CD4-positive, alpha-beta T cell (primary cell): ENCODE measurements at regions of chr1 and their contacts with region 1.

Region 1: DNA sequence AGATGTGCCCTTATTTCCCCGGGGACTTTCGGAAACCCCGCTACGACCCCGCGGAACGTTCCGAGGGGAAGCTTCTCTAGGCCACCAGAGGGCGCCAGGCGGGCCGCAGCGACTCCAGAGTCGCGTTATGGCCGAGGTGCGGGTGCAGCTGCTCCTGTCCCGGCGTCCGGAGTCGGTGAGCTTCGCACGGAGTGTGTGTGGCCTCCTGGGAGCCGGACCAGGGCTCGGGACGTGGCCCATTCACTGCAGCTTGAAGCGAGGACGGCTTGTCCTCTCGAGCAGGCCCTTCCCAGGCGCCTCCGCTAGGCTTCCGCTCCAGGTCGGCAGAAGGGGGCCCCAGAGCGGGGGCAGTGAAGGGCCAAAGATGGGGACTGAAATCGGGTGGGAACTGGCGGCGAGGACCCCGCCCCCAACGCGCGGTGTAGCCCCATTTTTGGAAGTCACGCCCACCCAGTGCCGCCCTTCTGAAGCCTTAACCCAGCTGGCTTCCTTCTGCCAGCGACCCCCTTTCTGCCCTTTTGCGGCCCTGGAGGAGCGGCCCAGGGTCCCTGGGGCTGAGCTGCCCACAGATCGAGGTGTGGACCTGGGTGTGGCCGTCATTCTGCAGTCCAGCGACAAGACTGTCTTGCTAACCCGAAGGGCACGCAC is at the start of gene NUDT17:
- DNase-seq: peak; percentile 63 to 88 (median 74)
- ATAC-seq: peak; percentile 80
- H3K4me3 ChIP-seq: peak within 1 kb of the TSS; percentile 77
- H3K4me3 Mint-ChIP-seq: no peak within 1 kb of the TSS
- H3K27ac ChIP-seq: no peak within 1 kb of the TSS
- H3K27ac Mint-ChIP-seq: peak within 1 kb of the TSS; percentile 40
- H3K4me1 ChIP-seq: peaks cover 20% of the 10 kb centered on the region
- H3K4me1 Mint-ChIP-seq: peaks cover 11% of the 10 kb centered on the region
- H3K27me3 ChIP-seq: no peaks in the 10 kb centered on the region
- H3K27me3 Mint-ChIP-seq: no peaks in the 10 kb centered on the region
- CTCF ChIP-seq: peak; percentile 96
- total RNA-seq, gene NUDT17: 1.6 to 2.8 TPM

Region 2: GRCh38 chr1:145804235-145805045 is 41.2 kb before region 1 on chr1:
- CTCF ChIA-PET with region 1: no interaction called
- POLR2A ChIA-PET with region 1: no interaction called
- intact Hi-C with region 1: no loop called
- DNase-seq: no peak
- ATAC-seq: no peak
- H3K4me3 ChIP-seq: no peak overlapping the region
- H3K4me3 Mint-ChIP-seq: no peak overlapping the region
- H3K27ac ChIP-seq: no peak overlapping the region
- H3K27ac Mint-ChIP-seq: no peak overlapping the region
- H3K4me1 ChIP-seq: no peaks in the 10 kb centered on the region
- H3K4me1 Mint-ChIP-seq: peaks cover 64% of the 10 kb centered on the region
- H3K27me3 ChIP-seq: no peaks in the 10 kb centered on the region
- H3K27me3 Mint-ChIP-seq: no peaks in the 10 kb centered on the region
- CTCF ChIP-seq: no peak

Region 3: GRCh38 chr1:145823565-145824498 is 21.8 kb before region 1 on chr1 and contains the starts of genes POLR3C and RNF115:
- CTCF ChIA-PET with region 1: interaction called, 27 read pairs
- POLR2A ChIA-PET with region 1: interaction called, 12 read pairs
- intact Hi-C with region 1: no loop called
- DNase-seq: peak; percentile 75 to 95 (median 86)
- ATAC-seq: peak; percentile 96
- H3K4me3 ChIP-seq: peak within 1 kb of the TSS; percentile 74
- H3K4me3 Mint-ChIP-seq: peak within 1 kb of the TSS; percentile 96
- H3K27ac ChIP-seq: peak within 1 kb of the TSS; percentile 78 to 81
- H3K27ac Mint-ChIP-seq: peak within 1 kb of the TSS; percentile 91
- H3K4me1 ChIP-seq: peaks cover 12% of the 10 kb centered on the region
- H3K4me1 Mint-ChIP-seq: peaks cover 29% of the 10 kb centered on the region
- H3K27me3 ChIP-seq: no peaks in the 10 kb centered on the region
- H3K27me3 Mint-ChIP-seq: no peaks in the 10 kb centered on the region
- CTCF ChIP-seq: no peak
- total RNA-seq, gene POLR3C: 18.6 to 19.9 TPM
- total RNA-seq, gene RNF115: 11.4 to 11.9 TPM

Region 4: GRCh38 chr1:145879775-145880174 is 34.1 kb after region 1 on chr1:
- CTCF ChIA-PET with region 1: interaction called, 17 read pairs
- POLR2A ChIA-PET with region 1: no interaction called
- intact Hi-C with region 1: no loop called
- DNase-seq: no peak
- ATAC-seq: no peak
- H3K4me3 ChIP-seq: no peak overlapping the region
- H3K4me3 Mint-ChIP-seq: no peak overlapping the region
- H3K27ac ChIP-seq: no peak overlapping the region
- H3K27ac Mint-ChIP-seq: no peak overlapping the region
- H3K4me1 ChIP-seq: no peaks in the 10 kb centered on the region
- H3K4me1 Mint-ChIP-seq: peaks cover 4% of the 10 kb centered on the region
- H3K27me3 ChIP-seq: peaks cover 13 to 18% of the 10 kb centered on the region in 2 experiments
- H3K27me3 Mint-ChIP-seq: peaks cover 25% of the 10 kb centered on the region
- CTCF ChIP-seq: no peak

Region 5: DNA sequence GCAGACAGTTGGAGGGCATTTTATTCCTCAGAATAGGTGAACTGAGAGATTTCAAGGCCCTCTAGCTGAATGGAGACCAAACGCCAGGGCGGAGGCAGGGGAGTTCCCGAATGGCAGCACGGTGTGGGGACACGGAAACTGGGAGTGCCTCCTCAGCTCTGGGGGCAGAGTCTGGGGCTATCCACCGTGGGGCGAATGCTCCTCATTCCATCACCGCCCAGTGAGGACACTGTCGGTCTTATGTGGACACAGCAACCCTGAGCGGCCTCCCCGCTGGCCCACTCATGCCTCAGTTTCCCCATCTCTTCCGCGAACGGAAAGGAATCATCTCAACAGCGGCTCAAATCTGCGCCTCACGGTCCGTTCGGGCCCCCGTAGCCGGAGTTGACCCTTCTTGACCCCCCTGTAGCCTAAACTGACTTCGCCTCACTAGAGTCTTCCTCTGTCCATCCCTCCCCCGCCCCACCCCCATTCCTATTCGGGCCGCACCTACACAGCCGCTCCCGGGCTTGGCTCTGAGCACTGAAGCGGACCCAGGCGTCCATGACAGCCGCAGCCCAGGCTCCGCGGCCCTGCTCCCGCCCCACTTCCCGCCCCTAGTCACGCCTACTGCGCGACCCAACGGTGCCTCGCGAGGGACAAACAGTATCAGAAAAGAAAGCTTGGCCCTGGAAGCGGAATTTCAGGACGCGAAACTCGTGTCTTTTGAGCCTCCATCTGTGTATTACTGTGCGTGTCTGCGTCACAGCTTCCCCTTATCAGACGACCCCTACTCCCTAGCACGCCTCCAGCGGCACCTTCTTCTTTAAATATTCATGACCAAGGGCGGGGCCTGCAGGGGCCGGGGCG is 72.7 kb after region 1 on chr1 and contains the start of gene PEX11B:
- CTCF ChIA-PET with region 1: interaction called, 14 read pairs
- POLR2A ChIA-PET with region 1: interaction called, 4 read pairs
- intact Hi-C with region 1: no loop called
- DNase-seq: peak; percentile 87 to 96 (median 92)
- ATAC-seq: peak; percentile 90
- H3K4me3 ChIP-seq: peak within 1 kb of the TSS; percentile 87
- H3K4me3 Mint-ChIP-seq: peak within 1 kb of the TSS; percentile 94
- H3K27ac ChIP-seq: peak within 1 kb of the TSS; percentile 52 to 60
- H3K27ac Mint-ChIP-seq: peak within 1 kb of the TSS; percentile 92
- H3K4me1 ChIP-seq: peaks cover 31% of the 10 kb centered on the region
- H3K4me1 Mint-ChIP-seq: peaks cover 47% of the 10 kb centered on the region
- H3K27me3 ChIP-seq: no peaks in the 10 kb centered on the region
- H3K27me3 Mint-ChIP-seq: no peaks in the 10 kb centered on the region
- CTCF ChIP-seq: no peak
- total RNA-seq, gene PEX11B: 11.6 to 13.2 TPM

Region 6: DNA sequence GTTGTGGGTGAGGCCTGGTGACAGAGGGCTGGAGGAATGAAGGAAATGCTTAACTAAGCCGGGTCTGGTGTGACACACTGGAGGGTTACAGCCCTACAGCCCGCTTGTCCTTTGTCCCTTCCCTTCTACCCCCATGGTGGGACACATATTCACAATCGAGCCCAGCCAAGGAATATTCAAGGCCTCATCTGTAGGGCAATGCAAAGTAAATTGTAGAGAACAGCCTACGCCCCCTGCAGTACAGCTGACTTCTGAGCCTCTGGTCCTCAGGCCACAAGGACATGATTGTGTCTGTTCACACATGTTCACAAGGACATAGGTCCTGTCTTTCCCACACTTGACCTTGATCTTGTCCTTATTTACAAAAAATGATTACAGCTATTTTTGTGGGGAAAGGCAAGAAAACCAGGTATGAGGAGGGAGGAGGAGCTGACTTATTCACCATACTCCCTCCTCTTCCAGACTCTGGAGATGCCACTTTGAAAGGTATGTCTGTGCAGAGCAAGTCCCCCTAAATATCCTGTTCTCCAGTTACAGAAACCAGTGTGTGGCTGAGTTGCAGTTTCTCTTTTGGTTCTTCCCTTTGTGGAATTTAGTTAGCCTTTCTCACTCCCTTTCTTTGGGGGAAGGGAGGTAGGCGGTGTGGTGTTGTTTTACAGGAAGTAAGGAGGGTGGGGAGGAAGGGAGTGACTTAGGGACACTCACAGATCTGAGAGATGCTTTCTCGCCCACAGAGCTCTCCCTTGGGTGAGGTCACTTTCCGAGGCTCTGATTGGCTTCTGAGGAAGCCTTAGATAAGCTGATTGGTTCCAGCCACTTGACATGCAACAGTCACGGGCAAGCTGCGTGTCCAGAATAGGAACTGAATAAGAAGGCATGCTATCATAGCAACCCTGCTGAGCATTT is 133.5 kb after region 1 on chr1:
- CTCF ChIA-PET with region 1: interaction called, 8 read pairs
- POLR2A ChIA-PET with region 1: interaction called, 7 read pairs
- intact Hi-C with region 1: loop called (anchors 1 kb)
- DNase-seq: peak in 13 of 14 experiments; percentile 45 to 97 (median 66)
- ATAC-seq: peak; percentile 69
- H3K4me3 ChIP-seq: peak overlapping the region; percentile 45
- H3K4me3 Mint-ChIP-seq: no peak overlapping the region
- H3K27ac ChIP-seq: peak overlapping the region; percentile 93 to 94
- H3K27ac Mint-ChIP-seq: no peak overlapping the region
- H3K4me1 ChIP-seq: peaks cover 69% of the 10 kb centered on the region
- H3K4me1 Mint-ChIP-seq: peaks cover 6% of the 10 kb centered on the region
- H3K27me3 ChIP-seq: no peaks in the 10 kb centered on the region
- H3K27me3 Mint-ChIP-seq: no peaks in the 10 kb centered on the region
- CTCF ChIP-seq: peak; percentile 28

Region 7: GRCh38 chr1:146036965-146037646 is 191.5 kb after region 1 on chr1:
- CTCF ChIA-PET with region 1: interaction called, 12 read pairs
- POLR2A ChIA-PET with region 1: interaction called, 5 read pairs
- intact Hi-C with region 1: no loop called
- DNase-seq: peak; percentile 50 to 88 (median 68)
- ATAC-seq: peak; percentile 59
- H3K4me3 ChIP-seq: peak overlapping the region; percentile 83
- H3K4me3 Mint-ChIP-seq: peak overlapping the region; percentile 98
- H3K27ac ChIP-seq: peak overlapping the region; percentile 58 to 83
- H3K27ac Mint-ChIP-seq: peak overlapping the region; percentile 100
- H3K4me1 ChIP-seq: peaks cover 38% of the 10 kb centered on the region
- H3K4me1 Mint-ChIP-seq: peaks cover 45% of the 10 kb centered on the region
- H3K27me3 ChIP-seq: no peaks in the 10 kb centered on the region
- H3K27me3 Mint-ChIP-seq: peaks cover 40% of the 10 kb centered on the region
- CTCF ChIP-seq: no peak